H1 (cell line): ENCODE measurements at regions of chr1 and their contacts with region 1.

Region 1: DNA sequence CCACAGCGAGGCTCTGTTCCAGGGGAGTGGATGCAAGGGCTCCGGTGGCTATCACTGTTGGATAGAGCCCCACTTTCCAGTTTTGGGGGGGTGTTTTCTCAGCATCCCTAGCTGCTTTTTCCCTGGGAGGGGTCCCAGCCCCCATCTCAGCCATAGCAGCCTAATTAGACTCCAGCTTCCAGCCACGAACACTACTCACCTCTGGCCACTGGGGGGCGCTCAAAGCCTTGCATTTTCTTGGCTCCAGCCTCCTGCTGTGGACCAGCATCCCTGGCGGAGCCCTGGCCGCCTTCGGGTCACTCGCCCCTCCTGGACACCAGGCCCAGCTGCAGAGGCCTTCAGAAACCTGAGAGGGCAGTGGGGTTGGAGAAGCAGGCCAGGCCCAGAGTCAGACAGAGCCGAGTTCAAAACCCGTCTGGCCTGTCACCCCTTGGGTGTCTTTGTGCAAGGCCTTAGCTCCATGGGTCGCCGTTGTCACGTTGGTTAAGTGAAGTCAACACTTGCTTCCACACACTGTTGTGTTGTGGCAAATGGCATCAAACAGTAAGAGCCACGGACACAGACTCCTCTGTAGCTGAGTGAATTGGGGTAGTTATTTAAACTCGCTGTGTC is 93.5 kb upstream of the ACTL8 start:
- DNase-seq: peak; percentile 10 to 96
- H3K4me3 ChIP-seq: no peak overlapping the region
- H3K27ac ChIP-seq: no peak overlapping the region
- H3K4me1 ChIP-seq: peaks cover 0 to 4% (median 0%) of the 10 kb centered on the region in 4 experiments; a peak in 2 of 7 replicates
- H3K27me3 ChIP-seq: no peaks in the 10 kb centered on the region
- CTCF ChIP-seq: peak; percentile 90 to 94 (median 91)
- EP300 ChIP-seq: no peak
- POLR2A ChIP-seq: no peak
- RAD21 ChIP-seq: peak; percentile 92 to 95

Region 2: DNA sequence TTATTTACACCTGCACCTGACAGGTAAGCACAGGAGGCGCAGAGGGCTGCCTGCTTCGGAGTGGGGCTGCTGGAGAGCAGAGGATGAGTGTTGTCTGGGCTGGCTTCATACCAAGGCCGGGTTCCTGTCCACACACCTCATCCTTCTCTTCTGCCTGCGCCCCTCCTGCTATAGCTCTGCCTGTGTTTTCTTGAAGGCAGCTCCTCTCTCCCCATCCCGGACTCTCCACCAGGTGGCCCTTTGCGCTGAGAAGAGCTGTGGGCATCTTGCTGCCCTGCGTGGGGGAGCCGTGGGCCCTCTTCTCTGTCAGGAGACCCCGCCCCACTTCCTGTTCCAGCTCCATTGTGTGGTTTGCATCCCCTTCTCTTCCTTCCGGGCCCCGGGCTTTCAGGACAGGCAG is 87.1 kb before region 1 on chr1:
- CTCF ChIA-PET with region 1: interaction called, 12 read pairs
- POLR2A ChIA-PET with region 1: no interaction called
- DNase-seq: no peak
- H3K4me3 ChIP-seq: no peak overlapping the region
- H3K27ac ChIP-seq: no peak overlapping the region
- H3K4me1 ChIP-seq: peaks cover 15 to 62% (median 43%) of the 10 kb centered on the region in 4 experiments
- H3K27me3 ChIP-seq: no peaks in the 10 kb centered on the region
- CTCF ChIP-seq: peak in 2 of 3 experiments; percentile 46 to 55; a peak in 3 of 4 replicates
- EP300 ChIP-seq: no peak
- POLR2A ChIP-seq: no peak
- RAD21 ChIP-seq: peak; percentile 40 to 50; a peak in 3 of 4 replicates

Region 3: DNA sequence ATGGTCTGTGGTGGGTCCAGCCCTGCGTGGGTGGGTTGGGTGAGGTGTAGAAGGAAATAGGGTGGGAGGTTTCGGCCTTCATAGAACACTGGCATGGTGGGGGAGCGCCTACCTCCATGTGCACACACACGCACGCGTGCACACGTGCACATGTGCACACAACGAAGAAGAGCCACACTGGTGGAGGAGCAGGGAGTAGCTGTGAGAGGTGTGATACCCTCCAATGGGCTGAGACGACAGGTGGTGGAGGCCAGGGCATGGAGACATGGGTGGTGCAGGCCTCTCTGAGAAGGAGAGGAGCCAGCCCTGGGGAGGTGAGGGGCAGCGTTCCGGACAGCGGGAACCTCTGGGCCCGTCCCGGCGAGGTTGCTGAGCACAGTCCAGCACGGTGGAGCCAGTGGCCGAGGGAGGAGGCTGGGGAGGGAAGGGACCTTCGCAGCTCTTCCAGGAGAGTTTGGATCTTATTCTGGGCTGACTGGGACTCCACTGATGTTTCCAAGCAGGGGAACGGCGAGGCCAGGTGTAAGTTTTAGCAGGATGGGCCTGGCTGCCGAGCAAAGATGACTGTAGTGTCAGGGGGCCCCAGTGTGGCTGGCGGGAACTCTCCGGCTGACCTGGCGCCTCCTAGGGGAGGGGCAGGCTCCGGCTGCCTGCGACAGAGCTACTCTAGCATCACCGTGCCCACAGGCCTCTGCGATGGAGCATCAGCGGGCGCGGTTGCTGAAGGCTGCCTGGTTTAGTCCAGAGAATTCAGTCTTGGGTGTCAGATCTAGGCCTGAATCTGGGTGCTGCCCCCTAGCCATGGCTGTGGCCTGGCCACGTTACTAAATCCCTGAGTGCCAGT is 15.0 kb before region 1 on chr1:
- CTCF ChIA-PET with region 1: interaction called, 26 read pairs
- POLR2A ChIA-PET with region 1: no interaction called
- DNase-seq: peak in 1 of 2 experiments; percentile 54
- H3K4me3 ChIP-seq: no peak overlapping the region
- H3K27ac ChIP-seq: no peak overlapping the region
- H3K4me1 ChIP-seq: 0 out of 7 replicates have a peak, but pooled peaks cover 0 to 2% (median 0%) of the 10 kb centered on the region in 4 experiments
- H3K27me3 ChIP-seq: no peaks in the 10 kb centered on the region
- CTCF ChIP-seq: peak in 2 of 3 experiments; percentile 20 to 39; a peak in 2 of 4 replicates
- EP300 ChIP-seq: no peak
- POLR2A ChIP-seq: no peak
- RAD21 ChIP-seq: no peak

Region 4: GRCh38 chr1:17696417-17697301 is 35.0 kb after region 1 on chr1:
- CTCF ChIA-PET with region 1: interaction called, 127 read pairs
- POLR2A ChIA-PET with region 1: no interaction called
- DNase-seq: peak; percentile 17 to 59
- H3K4me3 ChIP-seq: no peak overlapping the region
- H3K27ac ChIP-seq: no peak overlapping the region
- H3K4me1 ChIP-seq: peaks cover 0 to 8% (median under 1%) of the 10 kb centered on the region in 4 experiments; a peak in 4 of 7 replicates
- H3K27me3 ChIP-seq: no peaks in the 10 kb centered on the region; a peak in 1 of 7 replicates
- CTCF ChIP-seq: peak; percentile 40 to 64 (median 55)
- EP300 ChIP-seq: no peak
- POLR2A ChIP-seq: no peak
- RAD21 ChIP-seq: peak; percentile 36 to 57

Region 5: DNA sequence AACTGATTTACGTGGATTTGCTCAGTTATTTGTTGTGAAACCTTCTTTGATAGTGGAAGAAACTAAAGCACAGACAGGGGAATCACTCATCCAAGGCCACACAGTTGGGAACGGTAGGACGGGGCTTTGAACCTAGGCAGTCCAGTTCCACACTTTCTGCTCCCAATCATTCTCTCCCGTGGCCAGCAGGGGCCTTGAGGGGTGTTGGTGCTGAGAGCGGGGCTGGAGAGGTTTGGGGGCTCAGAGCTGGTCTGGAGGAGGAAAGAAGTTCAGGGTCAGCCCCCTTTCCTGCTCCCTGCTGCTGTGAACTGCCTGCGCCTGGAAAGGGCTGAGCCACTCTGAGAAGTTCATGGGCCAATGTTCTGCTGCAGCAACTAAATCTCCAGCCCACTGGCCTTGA is 62.0 kb after region 1 on chr1:
- CTCF ChIA-PET with region 1: interaction called, 14 read pairs
- POLR2A ChIA-PET with region 1: no interaction called
- DNase-seq: no peak
- H3K4me3 ChIP-seq: no peak overlapping the region
- H3K27ac ChIP-seq: no peak overlapping the region
- H3K4me1 ChIP-seq: no peaks in the 10 kb centered on the region
- H3K27me3 ChIP-seq: no peaks in the 10 kb centered on the region
- CTCF ChIP-seq: peak; percentile 48 to 62 (median 49)
- EP300 ChIP-seq: no peak
- POLR2A ChIP-seq: no peak
- RAD21 ChIP-seq: peak; percentile 27 to 54; a peak in 3 of 4 replicates

Region 6: GRCh38 chr1:17768651-17769241 is 107.1 kb after region 1 on chr1:
- CTCF ChIA-PET with region 1: interaction called, 38 read pairs
- POLR2A ChIA-PET with region 1: no interaction called
- DNase-seq: no peak
- H3K4me3 ChIP-seq: no peak overlapping the region
- H3K27ac ChIP-seq: no peak overlapping the region
- H3K4me1 ChIP-seq: no peaks in the 10 kb centered on the region; a peak in 2 of 7 replicates
- H3K27me3 ChIP-seq: no peaks in the 10 kb centered on the region
- CTCF ChIP-seq: no peak
- EP300 ChIP-seq: no peak
- POLR2A ChIP-seq: no peak
- RAD21 ChIP-seq: no peak

Region 7: DNA sequence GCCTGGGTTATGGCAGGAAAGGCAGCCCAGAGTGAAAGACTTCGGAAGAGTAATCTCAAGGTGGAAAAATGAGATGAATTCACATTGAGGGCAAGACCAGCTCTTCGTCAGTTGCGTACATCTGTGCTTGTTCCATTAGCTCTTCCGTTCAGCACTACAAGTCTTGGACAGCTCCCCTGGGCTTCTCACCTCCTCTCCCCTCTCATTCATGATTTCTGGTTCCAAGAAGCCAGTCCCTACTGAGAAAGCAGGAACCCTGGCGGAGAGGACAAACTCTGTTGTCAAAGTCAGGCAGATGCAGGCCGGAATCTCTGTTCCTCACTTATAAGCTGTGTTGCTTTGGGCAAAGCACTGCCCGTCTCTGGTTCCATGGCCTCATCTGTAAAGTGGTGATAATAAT is 170.0 kb after region 1 on chr1:
- CTCF ChIA-PET with region 1: interaction called, 28 read pairs
- POLR2A ChIA-PET with region 1: no interaction called
- DNase-seq: peak; percentile 21 to 76
- H3K4me3 ChIP-seq: no peak overlapping the region
- H3K27ac ChIP-seq: no peak overlapping the region
- H3K4me1 ChIP-seq: no peaks in the 10 kb centered on the region
- H3K27me3 ChIP-seq: 0 out of 7 replicates have a peak, but pooled peaks cover 0 to 2% (median 0%) of the 10 kb centered on the region in 4 experiments
- CTCF ChIP-seq: no peak
- EP300 ChIP-seq: no peak
- POLR2A ChIP-seq: no peak
- RAD21 ChIP-seq: peak in 1 of 2 experiments; percentile 26; a peak in 2 of 4 replicates